Activated B cell treated with CpG ODN at 0.5 μM for 24 hours (primary cell): ENCODE measurements at regions of chr9 and their contacts with region 1.

Region 1: DNA sequence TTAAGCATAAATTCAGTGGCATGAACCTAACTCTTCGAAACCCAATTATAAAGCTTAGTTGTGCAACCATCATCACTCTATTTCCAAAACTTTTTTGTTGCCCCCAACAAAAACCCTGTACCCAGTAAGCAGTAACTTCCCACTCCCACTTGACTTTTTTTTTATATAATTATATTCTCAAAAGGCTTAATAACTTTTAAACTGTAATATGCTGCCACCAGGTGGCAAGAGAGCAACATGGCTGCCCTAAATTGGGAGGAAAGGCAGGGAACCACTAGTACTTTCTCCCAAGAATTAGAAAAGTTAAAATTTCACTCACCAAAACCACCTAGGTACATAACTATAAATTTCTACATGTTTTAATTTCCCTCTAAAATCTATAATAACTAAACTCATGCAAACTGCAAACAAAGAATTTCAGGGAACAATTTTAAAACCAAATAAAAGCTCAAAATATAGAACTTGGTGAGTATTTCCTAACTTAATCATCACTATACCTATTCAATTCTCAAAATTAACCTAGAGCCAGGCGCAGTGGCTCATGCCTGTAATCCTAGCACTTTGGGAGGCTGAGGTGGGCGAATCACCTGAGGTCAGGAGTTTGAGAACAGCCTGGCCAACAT is 50.2 kb upstream of the RNF38 start:
- DNase-seq: no peak
- ATAC-seq: no peak
- H3K4me3 Mint-ChIP-seq: no peak overlapping the region
- H3K27ac Mint-ChIP-seq: no peak overlapping the region
- H3K4me1 Mint-ChIP-seq: peaks cover 4% of the 10 kb centered on the region
- H3K27me3 Mint-ChIP-seq: no peaks in the 10 kb centered on the region
- CTCF ChIP-seq: no peak

Region 2: GRCh38 chr9:36551129-36551528 is 100.9 kb after region 1 on chr9:
- CTCF ChIA-PET with region 1: interaction called, 13 read pairs
- POLR2A ChIA-PET with region 1: no interaction called
- intact Hi-C with region 1: loop called (anchors 1 kb)
- DNase-seq: no peak
- ATAC-seq: no peak
- H3K4me3 Mint-ChIP-seq: no peak overlapping the region
- H3K27ac Mint-ChIP-seq: no peak overlapping the region
- H3K4me1 Mint-ChIP-seq: no peaks in the 10 kb centered on the region
- H3K27me3 Mint-ChIP-seq: peaks cover 6% of the 10 kb centered on the region
- CTCF ChIP-seq: no peak

Region 3: DNA sequence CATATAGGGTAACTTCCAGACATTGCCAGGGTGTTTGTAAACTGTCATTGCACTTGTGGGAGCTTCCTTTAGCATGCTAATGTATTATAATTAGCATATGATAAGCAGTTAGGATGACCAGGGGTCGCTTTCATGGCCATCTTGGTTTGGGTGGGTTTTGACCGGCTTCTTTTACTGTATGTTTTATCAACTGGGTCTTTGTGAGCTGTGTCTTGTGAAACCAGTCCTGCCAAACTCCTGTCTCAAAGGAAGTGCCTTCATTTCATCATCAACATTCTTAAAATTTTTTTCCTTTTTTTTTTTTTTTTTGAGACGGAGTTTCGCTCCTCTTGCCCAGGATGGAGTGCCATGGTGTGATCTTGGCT is 110.6 kb after region 1 on chr9:
- CTCF ChIA-PET with region 1: interaction called, 13 read pairs
- POLR2A ChIA-PET with region 1: no interaction called
- intact Hi-C with region 1: no loop called
- DNase-seq: no peak
- ATAC-seq: no peak
- H3K4me3 Mint-ChIP-seq: no peak overlapping the region
- H3K27ac Mint-ChIP-seq: no peak overlapping the region
- H3K4me1 Mint-ChIP-seq: no peaks in the 10 kb centered on the region
- H3K27me3 Mint-ChIP-seq: no peaks in the 10 kb centered on the region
- CTCF ChIP-seq: no peak